ENCODE measurements at regions of chr15 and their contacts with region 1.

Region 1: GRCh38 chr15:80970018-80970658 is 19.5 kb downstream of the MESD start:
- DNase-seq: peak; percentile 78
- ATAC-seq: peak; percentile 78
- H3K4me3 ChIP-seq: peak overlapping the region; percentile 5; the same call in 1 of the 2 replicates
- H3K27ac ChIP-seq: peak overlapping the region; percentile 29
- H3K4me1 ChIP-seq: peaks cover 19% of the 10 kb centered on the region
- H3K27me3 ChIP-seq: no peaks in the 10 kb centered on the region
- CTCF ChIP-seq: peak; percentile 87

Region 2: DNA sequence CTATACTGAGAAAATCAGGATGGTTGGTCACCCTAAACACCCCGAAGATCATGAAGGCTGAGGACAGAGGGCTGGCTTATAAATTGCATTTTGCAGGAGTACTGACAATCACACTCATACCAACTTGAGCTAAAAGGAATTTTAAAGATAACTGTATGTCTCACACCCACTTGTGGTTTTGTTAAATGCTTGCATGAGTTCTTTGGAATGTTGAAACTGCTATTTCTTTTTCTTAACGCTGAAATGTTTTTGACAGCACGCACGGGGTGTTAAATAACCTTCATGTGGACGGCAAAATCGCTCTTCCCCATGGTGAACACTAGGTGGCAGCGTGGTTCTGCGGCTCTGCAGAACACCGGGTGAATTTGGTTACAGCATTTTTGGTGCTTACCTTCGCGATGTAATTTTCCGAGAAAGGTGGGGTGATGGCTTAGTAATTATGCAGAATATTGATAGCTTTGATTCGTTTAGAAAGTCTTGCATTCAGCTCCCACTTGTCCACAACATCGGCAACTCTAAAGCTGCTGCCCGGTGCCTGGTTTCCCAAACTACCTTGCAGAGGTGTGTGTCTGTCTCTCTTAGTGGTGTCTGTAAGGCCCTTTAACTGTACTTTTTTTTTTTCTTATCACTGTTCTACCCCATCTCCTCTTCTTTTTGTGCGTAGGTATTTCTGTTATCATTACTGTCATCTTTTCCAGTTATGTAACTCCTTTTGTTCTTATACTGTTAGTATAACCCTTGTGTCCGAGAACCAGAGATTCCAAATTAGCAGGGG is 514.3 kb before region 1 on chr15:
- CTCF ChIA-PET with region 1: no interaction called
- POLR2A ChIA-PET with region 1: no interaction called
- intact Hi-C with region 1: loop called (anchors 1 kb)
- DNase-seq: peak; percentile 85
- ATAC-seq: peak; percentile 77
- H3K4me3 ChIP-seq: 0 out of 2 replicates have a peak overlapping the region, but pooled peaks have one; percentile 1
- H3K27ac ChIP-seq: no peak overlapping the region
- H3K4me1 ChIP-seq: peaks cover 12% of the 10 kb centered on the region
- H3K27me3 ChIP-seq: no peaks in the 10 kb centered on the region
- CTCF ChIP-seq: peak; percentile 95

Region 3: DNA sequence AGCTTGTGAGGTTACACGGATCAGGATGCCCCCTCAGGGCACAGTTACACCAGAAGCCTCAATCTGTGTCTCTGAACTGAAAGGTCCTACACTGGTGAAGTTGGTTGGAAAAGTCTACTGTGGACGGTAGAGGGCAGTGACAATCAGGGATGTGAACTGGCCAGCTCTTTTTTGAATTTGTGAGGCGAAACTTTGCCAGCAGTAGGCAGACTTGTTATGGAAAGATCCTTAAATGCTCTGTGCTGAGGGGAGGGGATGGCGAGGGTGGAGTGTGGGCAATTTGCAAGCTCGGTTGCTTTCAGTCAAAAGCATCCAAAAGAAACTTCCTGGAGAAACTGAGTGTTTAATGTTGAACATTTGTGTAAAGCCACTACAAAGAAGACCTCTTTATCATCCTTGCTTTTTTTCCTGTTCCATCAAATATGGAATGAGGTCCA is 402.4 kb before region 1 on chr15:
- CTCF ChIA-PET with region 1: interaction called, 5 read pairs
- POLR2A ChIA-PET with region 1: no interaction called
- intact Hi-C with region 1: loop called (anchors 5 kb)
- DNase-seq: peak; percentile 82
- ATAC-seq: peak; percentile 89
- H3K4me3 ChIP-seq: no peak overlapping the region
- H3K27ac ChIP-seq: peak overlapping the region; percentile 27
- H3K4me1 ChIP-seq: peaks cover 7% of the 10 kb centered on the region
- H3K27me3 ChIP-seq: no peaks in the 10 kb centered on the region
- CTCF ChIP-seq: peak; percentile 95

Region 4: GRCh38 chr15:80599359-80599758 is 370.8 kb before region 1 on chr15:
- CTCF ChIA-PET with region 1: no interaction called
- POLR2A ChIA-PET with region 1: no interaction called
- intact Hi-C with region 1: loop called (anchors 10 kb)
- DNase-seq: peak; percentile 80
- ATAC-seq: peak; percentile 45
- H3K4me3 ChIP-seq: no peak overlapping the region
- H3K27ac ChIP-seq: peak overlapping the region; percentile 94
- H3K4me1 ChIP-seq: peaks cover 41% of the 10 kb centered on the region
- H3K27me3 ChIP-seq: no peaks in the 10 kb centered on the region
- CTCF ChIP-seq: no peak

Region 5: GRCh38 chr15:80798911-80799310 is 171.2 kb before region 1 on chr15:
- CTCF ChIA-PET with region 1: no interaction called
- POLR2A ChIA-PET with region 1: no interaction called
- intact Hi-C with region 1: loop called (anchors 5 kb)
- DNase-seq: no peak
- ATAC-seq: no peak
- H3K4me3 ChIP-seq: no peak overlapping the region
- H3K27ac ChIP-seq: no peak overlapping the region
- H3K4me1 ChIP-seq: peaks cover 19% of the 10 kb centered on the region
- H3K27me3 ChIP-seq: no peaks in the 10 kb centered on the region
- CTCF ChIP-seq: no peak

Region 6: GRCh38 chr15:80856809-80857377 is 113.2 kb before region 1 on chr15:
- CTCF ChIA-PET with region 1: no interaction called
- POLR2A ChIA-PET with region 1: no interaction called
- intact Hi-C with region 1: loop called (anchors 1 kb)
- DNase-seq: peak; percentile 82
- ATAC-seq: peak; percentile 82
- H3K4me3 ChIP-seq: no peak overlapping the region
- H3K27ac ChIP-seq: peak overlapping the region; percentile 84
- H3K4me1 ChIP-seq: peaks cover 48% of the 10 kb centered on the region
- H3K27me3 ChIP-seq: no peaks in the 10 kb centered on the region
- CTCF ChIP-seq: no peak

Region 7: GRCh38 chr15:80915472-80915871 is 54.7 kb before region 1 on chr15:
- CTCF ChIA-PET with region 1: no interaction called
- POLR2A ChIA-PET with region 1: no interaction called
- intact Hi-C with region 1: loop called (anchors 10 kb)
- DNase-seq: no peak
- ATAC-seq: no peak
- H3K4me3 ChIP-seq: no peak overlapping the region
- H3K27ac ChIP-seq: peak overlapping the region; percentile 23; the same call in 1 of the 2 replicates
- H3K4me1 ChIP-seq: peaks cover 18% of the 10 kb centered on the region
- H3K27me3 ChIP-seq: no peaks in the 10 kb centered on the region
- CTCF ChIP-seq: no peak; the same call in 1 of the 2 replicates

Region 8: GRCh38 chr15:80934761-80935221 is 35.3 kb before region 1 on chr15:
- CTCF ChIA-PET with region 1: no interaction called
- POLR2A ChIA-PET with region 1: no interaction called
- intact Hi-C with region 1: no loop called
- DNase-seq: no peak
- ATAC-seq: no peak; the same call in 1 of the 2 replicates
- H3K4me3 ChIP-seq: no peak overlapping the region
- H3K27ac ChIP-seq: no peak overlapping the region
- H3K4me1 ChIP-seq: peaks cover 11% of the 10 kb centered on the region
- H3K27me3 ChIP-seq: no peaks in the 10 kb centered on the region
- CTCF ChIP-seq: no peak